CD14-positive monocyte (primary cell): ENCODE measurements at regions of chr7 and their contacts with region 1.

Region 1: GRCh38 chr7:11988186-11988585 is 156.2 kb upstream of the THSD7A start:
- DNase-seq: no peak
- H3K4me3 ChIP-seq: no peak overlapping the region
- H3K4me3 Mint-ChIP-seq: no peak overlapping the region
- H3K27ac ChIP-seq: no peak overlapping the region
- H3K27ac Mint-ChIP-seq: no peak overlapping the region
- H3K4me1 ChIP-seq: no peaks in the 10 kb centered on the region
- H3K4me1 Mint-ChIP-seq: no peaks in the 10 kb centered on the region
- H3K27me3 ChIP-seq: no peaks in the 10 kb centered on the region
- H3K27me3 Mint-ChIP-seq: no peaks in the 10 kb centered on the region
- CTCF ChIP-seq: no peak

Region 2: GRCh38 chr7:11804621-11805020 is 183.6 kb before region 1 on chr7:
- intact Hi-C with region 1: no loop called
- DNase-seq: no peak
- H3K4me3 ChIP-seq: no peak overlapping the region
- H3K4me3 Mint-ChIP-seq: no peak overlapping the region
- H3K27ac ChIP-seq: no peak overlapping the region
- H3K27ac Mint-ChIP-seq: no peak overlapping the region
- H3K4me1 ChIP-seq: no peaks in the 10 kb centered on the region
- H3K4me1 Mint-ChIP-seq: peaks cover 1% of the 10 kb centered on the region
- H3K27me3 ChIP-seq: no peaks in the 10 kb centered on the region
- H3K27me3 Mint-ChIP-seq: no peaks in the 10 kb centered on the region
- CTCF ChIP-seq: no peak

Region 3: GRCh38 chr7:11858622-11859302 is 129.4 kb before region 1 on chr7:
- intact Hi-C with region 1: loop called in 1 of 2 experiments (anchors 5 kb)
- DNase-seq: no peak
- H3K4me3 ChIP-seq: no peak overlapping the region
- H3K4me3 Mint-ChIP-seq: no peak overlapping the region
- H3K27ac ChIP-seq: no peak overlapping the region
- H3K27ac Mint-ChIP-seq: no peak overlapping the region
- H3K4me1 ChIP-seq: no peaks in the 10 kb centered on the region
- H3K4me1 Mint-ChIP-seq: no peaks in the 10 kb centered on the region
- H3K27me3 ChIP-seq: no peaks in the 10 kb centered on the region
- H3K27me3 Mint-ChIP-seq: no peaks in the 10 kb centered on the region
- CTCF ChIP-seq: no peak